Activated T-helper 2 cell treated with anti-CD3 and anti-CD28 coated beads, Interferon-gamma antibody, Interleukin-2, Interleukin-4, amounts not matched to agents 10 μg/mL and 5 μg/mL and 100 μg/mL, durations not matched to agents 14 hours and 24 hours and 36 hours (primary cell): ENCODE measurements at regions of chr12 and their contacts with region 1.

Region 1: DNA sequence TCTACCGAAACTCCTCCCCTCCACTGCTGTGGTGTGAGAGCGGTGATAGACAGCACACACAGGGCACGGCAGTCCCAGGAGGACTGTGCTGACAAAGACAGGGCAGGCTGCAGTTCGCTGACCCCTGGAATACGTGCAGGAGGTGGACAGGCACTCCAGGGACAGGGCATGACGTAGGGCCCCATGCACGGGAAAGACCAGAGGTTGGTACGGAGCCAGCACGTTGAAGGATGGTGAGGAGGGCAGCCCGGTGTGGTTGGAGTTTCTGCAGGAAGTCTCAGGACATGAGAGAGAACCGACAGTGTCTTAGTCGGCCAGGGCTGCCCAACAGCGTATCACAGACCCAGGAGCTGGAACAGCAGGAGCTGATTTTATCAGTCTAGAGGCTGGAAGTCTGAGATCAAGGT is 254.2 kb upstream of the FKBP4 start:
- DNase-seq: no peak
- H3K4me3 Mint-ChIP-seq: no peak overlapping the region
- H3K27ac Mint-ChIP-seq: no peak overlapping the region
- H3K4me1 Mint-ChIP-seq: peaks cover 27% of the 10 kb centered on the region
- H3K27me3 Mint-ChIP-seq: no peaks in the 10 kb centered on the region

Region 2: GRCh38 chr12:2256915-2257314 is 283.6 kb before region 1 on chr12:
- intact Hi-C with region 1: no loop called
- DNase-seq: no peak
- H3K4me3 Mint-ChIP-seq: no peak overlapping the region
- H3K27ac Mint-ChIP-seq: no peak overlapping the region
- H3K4me1 Mint-ChIP-seq: peaks cover 4% of the 10 kb centered on the region
- H3K27me3 Mint-ChIP-seq: peaks cover 6% of the 10 kb centered on the region

Region 3: DNA sequence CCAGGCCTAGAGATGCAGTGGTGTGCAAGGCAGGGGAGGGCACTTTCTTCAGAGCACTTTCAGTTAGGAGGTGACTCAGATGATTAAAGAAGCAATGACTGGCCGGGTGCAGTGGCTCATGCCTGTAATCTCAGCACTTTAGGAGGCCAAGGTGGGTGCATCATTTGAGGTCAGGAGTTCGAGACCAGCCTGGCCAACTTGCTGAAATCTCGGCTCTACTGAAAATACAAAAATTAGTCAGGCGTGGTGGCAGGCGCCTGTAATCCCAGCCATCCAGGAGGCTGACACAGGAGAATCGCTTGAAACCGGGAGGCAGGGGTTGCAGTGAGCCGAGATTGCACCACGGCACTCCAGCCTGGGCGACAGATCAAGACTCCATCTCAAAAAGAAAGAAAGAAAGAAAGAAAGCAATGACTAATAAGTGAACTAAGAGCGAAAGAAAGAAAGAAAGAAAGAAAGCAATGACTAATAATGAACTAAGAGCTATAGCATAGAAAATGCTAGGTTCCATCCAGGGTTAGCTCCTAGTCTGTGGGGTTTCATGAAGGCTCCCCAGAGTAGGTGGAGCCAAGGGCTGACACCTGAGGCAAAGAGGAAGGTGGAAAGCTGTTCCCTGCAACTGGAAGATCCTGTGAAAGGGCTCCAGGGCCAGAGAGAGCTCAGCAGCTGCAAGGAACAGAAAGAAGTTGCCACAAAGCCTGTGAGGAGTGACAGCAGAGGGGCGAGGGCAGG is 153.3 kb before region 1 on chr12:
- intact Hi-C with region 1: loop called (anchors 5 kb)
- DNase-seq: no peak
- H3K4me3 Mint-ChIP-seq: no peak overlapping the region
- H3K27ac Mint-ChIP-seq: no peak overlapping the region
- H3K4me1 Mint-ChIP-seq: no peaks in the 10 kb centered on the region
- H3K27me3 Mint-ChIP-seq: peaks cover 14% of the 10 kb centered on the region

Region 4: DNA sequence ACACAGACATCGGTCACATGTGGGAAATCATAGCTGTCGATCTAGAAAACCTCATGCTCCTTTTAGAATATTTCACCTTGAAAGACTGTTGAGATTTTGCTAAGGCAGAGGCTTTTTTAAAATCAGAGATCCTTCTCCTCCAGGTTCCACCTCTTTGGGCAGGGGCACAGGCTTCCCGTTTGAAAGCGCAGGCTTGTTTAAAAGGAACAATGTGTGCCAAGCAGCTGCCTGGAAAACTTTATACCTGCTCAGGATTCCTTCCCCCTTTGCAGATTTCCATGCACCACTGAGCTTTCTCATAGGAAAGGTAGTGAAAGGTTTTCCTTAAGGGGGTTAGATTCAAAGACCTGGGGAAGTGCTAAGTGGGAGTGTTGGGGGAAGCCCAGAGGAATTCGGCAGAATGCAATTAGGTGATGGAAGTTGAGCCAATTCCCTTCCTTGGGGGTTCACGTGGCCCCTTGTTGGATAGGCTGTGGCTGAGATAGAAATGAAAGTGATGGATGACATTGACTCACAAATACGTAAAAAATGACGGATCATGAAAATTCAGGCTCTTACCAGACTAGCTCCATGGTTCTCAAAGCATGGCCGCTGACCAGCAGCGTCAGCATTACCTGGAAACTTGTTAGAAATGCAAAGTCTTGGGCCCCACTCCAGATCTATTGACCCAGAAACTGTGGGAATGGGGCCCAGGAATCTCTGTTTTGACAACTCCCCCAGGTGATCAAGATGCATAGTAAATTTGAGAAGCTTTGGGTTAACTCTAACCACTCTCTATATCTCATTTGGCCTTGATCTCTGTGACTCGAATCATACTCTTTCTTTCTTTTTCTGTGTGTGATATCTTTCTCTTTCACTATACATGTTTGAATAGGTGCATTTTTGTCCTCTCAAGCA is 27.1 kb before region 1 on chr12:
- intact Hi-C with region 1: loop called (anchors 1 kb)
- DNase-seq: no peak
- H3K4me3 Mint-ChIP-seq: no peak overlapping the region
- H3K27ac Mint-ChIP-seq: peak overlapping the region; percentile 19
- H3K4me1 Mint-ChIP-seq: peaks cover 2% of the 10 kb centered on the region
- H3K27me3 Mint-ChIP-seq: peaks cover 2% of the 10 kb centered on the region

Region 5: DNA sequence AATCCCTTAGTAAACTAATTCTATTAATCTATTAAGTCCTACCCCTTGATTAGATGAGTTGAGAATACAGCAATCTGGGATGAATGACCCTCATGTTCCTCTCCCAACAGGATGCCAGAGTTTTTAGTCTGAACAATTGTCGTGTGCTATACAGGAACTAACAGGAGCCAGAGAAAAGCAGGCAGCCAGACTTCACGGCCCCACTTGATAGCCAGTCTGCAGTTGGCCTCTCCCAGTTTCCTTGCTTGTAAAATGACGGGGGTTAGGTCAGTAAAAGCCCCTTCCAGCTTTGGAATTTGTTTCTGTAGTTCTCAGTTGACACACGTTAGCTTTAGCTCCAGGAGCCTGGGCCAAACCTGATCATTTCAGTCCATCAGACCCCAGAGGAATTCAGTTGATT is 12.5 kb before region 1 on chr12:
- intact Hi-C with region 1: loop called (anchors 2 kb)
- DNase-seq: no peak
- H3K4me3 Mint-ChIP-seq: no peak overlapping the region
- H3K27ac Mint-ChIP-seq: no peak overlapping the region
- H3K4me1 Mint-ChIP-seq: peaks cover 32% of the 10 kb centered on the region
- H3K27me3 Mint-ChIP-seq: no peaks in the 10 kb centered on the region

Region 6: GRCh38 chr12:2583091-2583497 is 42.6 kb after region 1 on chr12:
- intact Hi-C with region 1: no loop called
- DNase-seq: peak; percentile 50
- H3K4me3 Mint-ChIP-seq: no peak overlapping the region
- H3K27ac Mint-ChIP-seq: no peak overlapping the region
- H3K4me1 Mint-ChIP-seq: peaks cover 3% of the 10 kb centered on the region
- H3K27me3 Mint-ChIP-seq: peaks cover 27% of the 10 kb centered on the region

Region 7: DNA sequence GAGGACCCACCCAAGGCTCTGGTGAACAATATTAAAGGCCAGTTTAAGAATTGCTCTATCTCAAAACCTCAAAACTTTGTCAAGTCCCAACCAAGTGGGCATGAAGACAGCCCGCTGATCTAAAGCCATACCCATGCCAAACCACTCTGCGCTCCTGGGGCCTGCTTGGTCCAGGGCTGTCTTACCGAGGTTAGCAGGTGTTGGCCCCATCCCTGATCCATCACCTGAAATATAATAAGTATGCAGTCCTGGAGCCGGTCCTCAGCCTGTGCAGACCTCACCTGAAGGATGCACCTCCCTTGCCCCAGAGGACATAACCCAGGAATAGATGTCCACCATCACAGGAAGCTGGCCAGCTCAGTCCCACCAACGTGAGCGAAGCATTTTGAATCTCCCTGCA is 55.9 kb after region 1 on chr12:
- intact Hi-C with region 1: no loop called
- DNase-seq: no peak
- H3K4me3 Mint-ChIP-seq: no peak overlapping the region
- H3K27ac Mint-ChIP-seq: no peak overlapping the region
- H3K4me1 Mint-ChIP-seq: no peaks in the 10 kb centered on the region
- H3K27me3 Mint-ChIP-seq: peaks cover 2% of the 10 kb centered on the region

Region 8: DNA sequence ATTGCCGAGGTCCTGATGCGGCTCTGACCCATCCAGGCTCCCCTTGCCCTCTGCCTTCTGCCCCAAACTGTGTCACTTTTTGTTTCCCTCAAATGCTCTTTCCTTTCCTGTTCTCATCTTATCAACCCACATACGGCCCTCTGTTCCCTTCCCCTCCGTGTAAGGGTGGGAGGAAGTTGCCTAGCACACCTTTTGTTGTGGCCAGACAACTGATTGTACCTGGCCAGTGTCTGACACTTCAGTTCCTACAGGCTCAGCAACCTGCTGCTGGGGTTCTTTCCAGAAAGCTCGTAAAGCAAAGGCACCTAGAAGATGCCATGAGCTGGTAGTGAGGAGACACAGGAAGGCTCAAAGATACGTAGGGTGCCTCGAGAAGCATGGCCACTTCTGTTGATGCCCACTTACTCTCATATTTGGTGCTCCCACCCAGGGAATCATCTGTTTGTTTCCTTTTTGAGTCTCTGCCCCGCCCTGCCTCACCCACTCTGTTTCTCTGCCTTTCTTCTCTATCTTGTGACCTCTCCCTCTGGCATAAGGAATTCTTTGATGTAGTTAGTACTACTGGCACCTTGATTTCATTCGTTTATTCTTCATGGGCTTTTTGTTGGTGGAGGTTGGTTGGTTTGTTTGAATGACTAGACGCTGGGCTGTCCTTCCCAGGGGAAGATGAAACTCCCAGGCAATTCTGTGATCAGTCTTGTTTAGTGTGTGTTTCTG is 101.8 kb after region 1 on chr12:
- intact Hi-C with region 1: no loop called
- DNase-seq: no peak
- H3K4me3 Mint-ChIP-seq: no peak overlapping the region
- H3K27ac Mint-ChIP-seq: no peak overlapping the region
- H3K4me1 Mint-ChIP-seq: peaks cover 12% of the 10 kb centered on the region
- H3K27me3 Mint-ChIP-seq: peaks cover 32% of the 10 kb centered on the region